ENCODE measurements at regions of chr1 and their contacts with region 1.

Region 1: DNA sequence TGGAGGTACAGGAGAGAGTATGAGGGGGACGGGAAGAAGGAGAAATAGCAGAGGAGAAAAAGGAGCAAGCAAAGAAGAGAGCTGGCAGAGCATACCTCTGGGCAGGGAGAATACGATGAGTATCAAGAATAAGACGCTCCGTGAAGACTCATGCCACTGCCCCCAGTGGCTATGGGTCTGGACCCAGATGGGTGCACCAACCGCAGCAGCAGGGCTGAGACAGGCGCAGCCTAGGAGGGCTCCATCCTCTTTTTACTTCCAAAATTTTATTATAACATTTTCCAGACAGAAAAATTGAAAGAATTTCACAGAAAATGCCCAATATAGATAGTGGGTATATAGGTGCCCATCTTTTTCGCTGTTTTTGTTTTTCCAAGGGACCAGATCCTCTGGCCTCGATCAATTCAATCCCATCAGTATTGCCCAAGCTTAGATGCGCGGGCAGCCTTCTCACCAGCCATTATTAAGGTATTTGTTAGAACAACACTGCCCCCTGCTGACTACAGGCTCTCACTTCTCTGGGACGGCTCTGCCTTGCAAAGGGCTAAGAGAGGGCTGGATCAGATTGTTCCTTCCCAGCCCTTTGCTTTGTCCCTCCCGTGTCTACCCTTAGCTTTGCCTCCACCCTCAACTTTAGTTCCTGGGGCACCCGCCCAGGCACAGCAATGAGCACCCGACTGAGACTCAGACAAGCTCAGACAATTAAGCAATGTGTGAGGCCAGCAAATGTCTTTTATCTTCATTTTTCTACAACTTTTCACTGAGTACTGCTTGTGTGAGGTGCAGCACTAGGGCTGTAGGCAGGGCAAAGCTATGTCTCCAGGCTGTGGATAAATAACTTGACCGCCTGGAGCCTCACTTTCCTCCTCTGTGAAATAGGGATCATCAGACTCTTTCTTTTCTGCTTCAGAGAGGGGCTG is 17.5 kb upstream of the CAMK1G start:
- DNase-seq: peak; percentile 75 to 92
- H3K4me3 ChIP-seq: no peak overlapping the region
- H3K27ac ChIP-seq: no peak overlapping the region
- H3K4me1 ChIP-seq: peaks cover 0 to 4% (median 2%) of the 10 kb centered on the region in 4 experiments; a peak in 4 of 7 replicates
- H3K27me3 ChIP-seq: no peaks in the 10 kb centered on the region; a peak in 1 of 7 replicates
- CTCF ChIP-seq: peak; percentile 65 to 88 (median 76)
- EP300 ChIP-seq: no peak
- POLR2A ChIP-seq: no peak
- RAD21 ChIP-seq: peak; percentile 82 to 88

Region 2: DNA sequence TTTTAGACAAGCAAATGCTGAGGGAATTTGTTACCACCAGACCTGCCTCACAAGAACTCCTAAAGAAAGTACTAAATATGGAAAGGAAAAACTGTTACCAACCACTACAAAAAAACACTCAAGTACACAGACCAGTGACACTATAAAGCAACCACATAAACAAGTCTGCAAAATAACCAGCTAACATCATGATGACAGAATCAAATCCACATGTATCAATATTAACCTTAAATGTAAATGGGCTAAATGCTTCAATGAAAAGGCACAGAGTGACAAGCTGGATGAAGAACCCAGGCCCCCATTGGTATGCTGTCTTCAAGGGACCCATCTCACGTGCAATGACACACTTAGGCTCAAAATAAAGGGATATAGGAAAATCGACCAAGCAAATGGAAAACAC is 512.4 kb before region 1 on chr1:
- CTCF ChIA-PET with region 1: no interaction called
- POLR2A ChIA-PET with region 1: no interaction called
- DNase-seq: no peak
- H3K4me3 ChIP-seq: no peak overlapping the region
- H3K27ac ChIP-seq: no peak overlapping the region
- H3K4me1 ChIP-seq: no peaks in the 10 kb centered on the region; a peak in 1 of 7 replicates
- H3K27me3 ChIP-seq: peaks cover 0 to 12% (median 1%) of the 10 kb centered on the region in 4 experiments; a peak in 4 of 7 replicates
- CTCF ChIP-seq: no peak
- EP300 ChIP-seq: no peak
- POLR2A ChIP-seq: no peak
- RAD21 ChIP-seq: no peak

Region 3: GRCh38 chr1:209435654-209436566 is 130.1 kb before region 1 on chr1:
- CTCF ChIA-PET with region 1: interaction called, 10 read pairs
- POLR2A ChIA-PET with region 1: no interaction called
- DNase-seq: peak; percentile 75 to 97
- H3K4me3 ChIP-seq: no peak overlapping the region
- H3K27ac ChIP-seq: no peak overlapping the region
- H3K4me1 ChIP-seq: peaks cover 8 to 29% (median 25%) of the 10 kb centered on the region in 4 experiments
- H3K27me3 ChIP-seq: no peaks in the 10 kb centered on the region
- CTCF ChIP-seq: peak; percentile 92 to 93 (median 93)
- EP300 ChIP-seq: 0 out of 3 replicates have a peak, but pooled peaks of 1 of the 2 experiments have one; percentile 14
- POLR2A ChIP-seq: no peak
- RAD21 ChIP-seq: peak; percentile 99

Region 4: GRCh38 chr1:209527993-209528392 is 38.0 kb before region 1 on chr1:
- CTCF ChIA-PET with region 1: interaction called, 11 read pairs
- POLR2A ChIA-PET with region 1: no interaction called
- DNase-seq: no peak
- H3K4me3 ChIP-seq: no peak overlapping the region
- H3K27ac ChIP-seq: no peak overlapping the region
- H3K4me1 ChIP-seq: no peaks in the 10 kb centered on the region
- H3K27me3 ChIP-seq: no peaks in the 10 kb centered on the region; a peak in 1 of 7 replicates
- CTCF ChIP-seq: no peak
- EP300 ChIP-seq: no peak
- POLR2A ChIP-seq: no peak
- RAD21 ChIP-seq: no peak

Region 5: DNA sequence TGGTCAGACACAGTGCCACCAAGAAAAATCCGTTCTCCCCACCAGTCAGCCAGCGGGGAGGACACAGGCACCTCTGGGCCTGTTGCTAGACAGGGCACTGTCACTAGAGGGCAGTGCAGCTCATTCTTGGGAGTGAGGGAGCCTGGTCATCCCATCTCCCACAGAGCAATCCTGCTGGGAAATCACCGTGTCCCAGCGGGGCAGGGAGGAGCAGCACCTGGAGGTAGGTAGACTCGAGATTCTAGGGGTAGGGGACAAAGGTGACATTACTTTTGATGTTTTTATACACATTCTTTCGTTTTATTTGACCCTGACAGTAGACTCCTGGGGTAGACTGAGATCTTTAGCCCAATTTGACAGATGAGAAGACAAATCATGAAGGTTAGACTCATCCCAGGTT is 10.8 kb after region 1 on chr1:
- CTCF ChIA-PET with region 1: interaction called, 50 read pairs
- POLR2A ChIA-PET with region 1: no interaction called
- DNase-seq: peak; percentile 27 to 94
- H3K4me3 ChIP-seq: no peak overlapping the region
- H3K27ac ChIP-seq: no peak overlapping the region
- H3K4me1 ChIP-seq: peaks cover 0 to 4% (median 0%) of the 10 kb centered on the region in 4 experiments; a peak in 1 of 7 replicates
- H3K27me3 ChIP-seq: no peaks in the 10 kb centered on the region
- CTCF ChIP-seq: peak; percentile 88 to 98 (median 92)
- EP300 ChIP-seq: no peak
- POLR2A ChIP-seq: no peak
- RAD21 ChIP-seq: peak; percentile 86 to 89

Region 6: DNA sequence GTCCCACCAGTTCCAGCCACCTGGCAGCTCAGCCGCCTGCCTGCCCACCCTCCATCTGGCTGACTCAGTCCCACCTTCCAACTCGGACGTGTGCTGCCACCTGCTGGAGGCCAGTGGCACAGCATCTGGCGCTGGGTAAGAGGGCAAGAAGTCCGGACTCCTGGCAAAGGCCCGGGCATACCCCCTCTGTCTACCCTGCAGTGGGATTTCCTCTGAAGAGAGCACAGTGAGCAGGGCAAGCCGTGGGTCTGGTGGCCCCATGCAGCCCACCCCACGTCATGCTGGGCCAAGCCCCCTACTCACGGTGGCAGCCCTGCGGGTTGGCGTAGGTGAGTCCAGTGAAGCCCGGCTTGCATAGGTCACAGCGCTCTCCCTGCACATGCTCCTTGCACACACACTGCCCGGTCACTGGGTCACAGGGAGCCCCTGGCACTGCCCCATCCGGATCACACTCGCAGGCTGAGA is 61.7 kb after region 1 on chr1:
- CTCF ChIA-PET with region 1: interaction called, 14 read pairs
- POLR2A ChIA-PET with region 1: no interaction called
- DNase-seq: peak; percentile 75 to 98
- H3K4me3 ChIP-seq: no peak overlapping the region
- H3K27ac ChIP-seq: no peak overlapping the region
- H3K4me1 ChIP-seq: peaks cover 0 to 15% (median 9%) of the 10 kb centered on the region in 4 experiments; a peak in 4 of 7 replicates
- H3K27me3 ChIP-seq: no peaks in the 10 kb centered on the region
- CTCF ChIP-seq: peak; percentile 98
- EP300 ChIP-seq: no peak
- POLR2A ChIP-seq: no peak
- RAD21 ChIP-seq: peak; percentile 94 to 96

Measured in H1 (cell line).